Caco-2 (cell line): ENCODE measurements at regions of chr2 and their contacts with region 1.

Region 1: GRCh38 chr2:195656859-195657633 is at the start of gene SLC39A10:
- DNase-seq: peak; percentile 93 to 96
- H3K4me3 ChIP-seq: peak within 1 kb of the TSS; percentile 95
- H3K4me3 Mint-ChIP-seq: peak within 1 kb of the TSS; percentile 91
- H3K27ac Mint-ChIP-seq: peak within 1 kb of the TSS; percentile 92
- H3K4me1 ChIP-seq: peaks cover 29% of the 10 kb centered on the region
- H3K4me1 Mint-ChIP-seq: peaks cover 12% of the 10 kb centered on the region
- H3K27me3 ChIP-seq: no peaks in the 10 kb centered on the region
- H3K27me3 Mint-ChIP-seq: no peaks in the 10 kb centered on the region
- CTCF ChIP-seq: no peak
- total RNA-seq, gene SLC39A10: 45.5 and 61.0 TPM in 2 replicates

Region 2: GRCh38 chr2:195318440-195319111 is 338.5 kb before region 1 on chr2:
- CTCF ChIA-PET with region 1: no interaction called
- POLR2A ChIA-PET with region 1: no interaction called
- intact Hi-C with region 1: loop called (anchors 5 kb)
- DNase-seq: peak in 1 of 2 experiments; percentile 43
- H3K4me3 ChIP-seq: no peak overlapping the region
- H3K4me3 Mint-ChIP-seq: no peak overlapping the region
- H3K27ac Mint-ChIP-seq: no peak overlapping the region
- H3K4me1 ChIP-seq: peaks cover 7% of the 10 kb centered on the region; the same call in 1 of the 2 replicates
- H3K4me1 Mint-ChIP-seq: no peaks in the 10 kb centered on the region
- H3K27me3 ChIP-seq: no peaks in the 10 kb centered on the region
- H3K27me3 Mint-ChIP-seq: no peaks in the 10 kb centered on the region
- CTCF ChIP-seq: peak; percentile 38 to 69

Region 3: GRCh38 chr2:195498176-195498575 is 158.9 kb before region 1 on chr2:
- CTCF ChIA-PET with region 1: interaction called, 16 read pairs
- POLR2A ChIA-PET with region 1: no interaction called
- intact Hi-C with region 1: loop called (anchors 1 kb)
- DNase-seq: peak; percentile 52 to 54
- H3K4me3 ChIP-seq: no peak overlapping the region
- H3K4me3 Mint-ChIP-seq: no peak overlapping the region
- H3K27ac Mint-ChIP-seq: no peak overlapping the region
- H3K4me1 ChIP-seq: no peaks in the 10 kb centered on the region
- H3K4me1 Mint-ChIP-seq: no peaks in the 10 kb centered on the region
- H3K27me3 ChIP-seq: no peaks in the 10 kb centered on the region
- H3K27me3 Mint-ChIP-seq: peaks cover 4% of the 10 kb centered on the region
- CTCF ChIP-seq: peak; percentile 45 to 51

Region 4: DNA sequence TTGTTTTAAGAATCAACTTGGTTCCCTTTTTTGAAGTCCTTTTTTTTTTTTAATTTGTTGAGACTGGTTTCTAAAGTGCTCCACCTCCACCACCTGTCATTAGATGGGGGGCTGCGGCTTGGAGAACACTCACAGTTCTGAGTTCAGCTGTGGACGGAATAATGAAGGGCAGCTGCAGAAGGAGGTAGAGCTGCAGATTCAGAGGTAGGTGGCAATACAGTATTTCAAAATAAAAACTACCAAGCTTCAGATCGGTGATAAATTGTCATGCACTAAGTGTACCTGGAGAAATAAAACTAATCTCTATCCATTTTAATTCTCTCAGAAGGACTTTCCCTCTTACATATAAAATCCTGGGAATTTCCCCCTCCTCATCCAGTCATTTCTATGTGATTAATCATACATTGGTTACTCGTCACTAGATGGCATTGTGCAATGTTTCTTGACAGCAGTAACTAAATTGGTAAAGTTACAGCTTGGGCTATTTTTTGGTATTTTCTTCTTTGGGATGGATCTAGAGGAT is 81.1 kb before region 1 on chr2:
- CTCF ChIA-PET with region 1: interaction called, 18 read pairs
- POLR2A ChIA-PET with region 1: interaction called, 3 read pairs
- intact Hi-C with region 1: loop called (anchors 1 kb)
- DNase-seq: no peak
- H3K4me3 ChIP-seq: no peak overlapping the region
- H3K4me3 Mint-ChIP-seq: no peak overlapping the region
- H3K27ac Mint-ChIP-seq: no peak overlapping the region
- H3K4me1 ChIP-seq: peaks cover 13% of the 10 kb centered on the region
- H3K4me1 Mint-ChIP-seq: peaks cover 7% of the 10 kb centered on the region
- H3K27me3 ChIP-seq: no peaks in the 10 kb centered on the region
- H3K27me3 Mint-ChIP-seq: no peaks in the 10 kb centered on the region
- CTCF ChIP-seq: peak in 1 of 2 experiments; percentile 37

Region 5: DNA sequence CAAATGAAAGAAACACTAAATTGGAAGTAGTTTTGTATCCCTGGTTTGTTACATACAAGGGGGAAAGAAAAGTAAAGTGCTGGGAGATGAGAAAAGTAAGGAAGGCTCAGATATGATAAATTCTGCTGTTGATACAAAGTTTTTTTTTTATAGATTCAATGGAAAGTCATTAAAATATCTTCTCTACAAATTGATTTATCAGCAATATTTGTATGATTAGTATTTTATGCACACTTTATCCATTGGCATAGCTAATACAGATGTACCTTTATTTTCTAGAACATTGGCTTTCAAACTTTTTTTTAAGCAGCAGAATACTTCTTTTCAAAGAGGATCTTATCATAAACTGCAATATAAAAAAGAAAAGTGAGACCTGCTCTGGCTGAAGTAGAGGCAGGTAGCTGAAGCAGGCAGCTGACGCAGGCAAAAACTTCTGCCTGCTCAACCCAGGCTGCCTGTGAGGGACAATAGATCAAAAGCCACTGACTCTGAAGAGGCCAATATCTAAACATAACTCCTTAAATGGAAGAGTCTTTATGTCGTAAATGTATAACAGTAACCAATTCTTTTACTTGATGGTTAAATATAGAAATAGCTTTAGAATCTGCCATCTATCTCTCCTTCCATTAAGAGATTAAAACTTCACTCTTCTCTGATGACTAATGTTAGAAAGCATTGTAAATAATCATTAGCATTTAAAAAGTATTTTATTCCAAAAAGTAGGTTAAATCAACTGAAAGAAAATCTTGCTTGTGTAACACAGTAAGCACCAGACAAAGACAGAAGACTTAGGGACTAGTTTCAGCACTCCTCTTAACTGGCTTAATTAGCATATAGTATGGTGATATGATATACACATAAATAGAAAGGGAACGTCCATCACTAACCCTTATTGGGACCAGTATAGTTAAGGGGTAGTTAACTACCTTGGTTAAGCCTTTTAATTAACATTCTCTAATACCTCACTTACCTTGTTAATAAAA is 174.2 kb after region 1 on chr2:
- CTCF ChIA-PET with region 1: no interaction called
- POLR2A ChIA-PET with region 1: no interaction called
- intact Hi-C with region 1: loop called (anchors 5 kb)
- DNase-seq: no peak
- H3K4me3 ChIP-seq: no peak overlapping the region
- H3K4me3 Mint-ChIP-seq: no peak overlapping the region
- H3K27ac Mint-ChIP-seq: no peak overlapping the region
- H3K4me1 ChIP-seq: no peaks in the 10 kb centered on the region; the same call in 1 of the 2 replicates
- H3K4me1 Mint-ChIP-seq: no peaks in the 10 kb centered on the region
- H3K27me3 ChIP-seq: no peaks in the 10 kb centered on the region
- H3K27me3 Mint-ChIP-seq: peaks cover 2% of the 10 kb centered on the region
- CTCF ChIP-seq: no peak

Region 6: GRCh38 chr2:196068271-196069209 is 411.5 kb after region 1 on chr2 and contains the start of gene DNAH7:
- CTCF ChIA-PET with region 1: interaction called, 8 read pairs
- POLR2A ChIA-PET with region 1: interaction called, 4 read pairs
- intact Hi-C with region 1: loop called (anchors 2 kb)
- DNase-seq: peak; percentile 89 to 94
- H3K4me3 ChIP-seq: peak within 1 kb of the TSS; percentile 75
- H3K4me3 Mint-ChIP-seq: peak within 1 kb of the TSS; percentile 90
- H3K27ac Mint-ChIP-seq: peak within 1 kb of the TSS; percentile 97
- H3K4me1 ChIP-seq: peaks cover 4% of the 10 kb centered on the region; the same call in 1 of the 2 replicates
- H3K4me1 Mint-ChIP-seq: no peaks in the 10 kb centered on the region
- H3K27me3 ChIP-seq: no peaks in the 10 kb centered on the region
- H3K27me3 Mint-ChIP-seq: peaks cover 3% of the 10 kb centered on the region
- CTCF ChIP-seq: peak; percentile 86 to 97
- total RNA-seq, gene DNAH7: 0.16 and 0.30 TPM in 2 replicates